ENCODE measurements at regions of chr7 and their contacts with region 1.

Region 1: GRCh38 chr7:32942786-32943653 is 14.2 kb upstream of the FKBP9 start:
- DNase-seq: peak; percentile 90
- ATAC-seq: peak; percentile 96

Region 2: GRCh38 chr7:32846701-32847100 is 96.3 kb before region 1 on chr7:
- intact Hi-C with region 1: loop called (anchors 5 kb)
- DNase-seq: peak; percentile 95
- ATAC-seq: peak; percentile 100

Region 3: DNA sequence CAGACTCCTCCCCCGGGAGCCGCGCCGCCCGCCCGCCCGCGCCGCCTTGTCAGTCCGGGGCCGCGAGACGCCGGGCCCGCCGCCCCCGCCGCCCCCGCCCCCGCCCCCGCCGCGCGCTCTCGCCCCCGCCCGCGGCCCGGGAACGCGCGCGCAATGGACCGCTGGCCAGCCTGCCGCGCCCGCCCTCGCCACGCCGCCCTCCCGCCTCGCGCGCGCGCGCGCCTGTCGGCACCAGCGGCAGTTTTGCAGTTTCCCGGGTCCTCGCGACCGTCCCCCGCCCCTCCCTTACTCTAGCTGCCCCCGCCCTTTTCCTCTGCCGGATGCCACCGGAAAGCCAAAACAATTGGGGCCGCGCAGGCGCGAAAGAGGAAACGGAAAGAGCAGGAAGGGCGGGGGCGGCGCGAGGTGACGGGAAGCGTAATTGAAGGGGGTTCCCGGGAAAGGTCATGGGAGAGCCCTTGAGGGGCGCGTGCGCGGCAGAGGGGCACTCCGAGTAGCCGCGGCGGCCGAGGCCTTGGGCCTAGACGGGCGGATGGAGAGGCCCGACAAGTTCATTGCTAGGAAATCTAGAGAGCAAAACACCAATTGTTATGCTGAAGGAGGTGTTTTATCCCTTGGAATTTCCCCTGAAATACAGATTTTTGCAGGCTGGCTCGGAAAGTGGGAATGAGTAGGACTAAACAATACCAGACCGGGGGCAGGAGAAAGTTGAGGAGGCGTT is 51.1 kb before region 1 on chr7:
- intact Hi-C with region 1: loop called (anchors 5 kb)
- DNase-seq: peak; percentile 98
- ATAC-seq: peak; percentile 90

Region 4: DNA sequence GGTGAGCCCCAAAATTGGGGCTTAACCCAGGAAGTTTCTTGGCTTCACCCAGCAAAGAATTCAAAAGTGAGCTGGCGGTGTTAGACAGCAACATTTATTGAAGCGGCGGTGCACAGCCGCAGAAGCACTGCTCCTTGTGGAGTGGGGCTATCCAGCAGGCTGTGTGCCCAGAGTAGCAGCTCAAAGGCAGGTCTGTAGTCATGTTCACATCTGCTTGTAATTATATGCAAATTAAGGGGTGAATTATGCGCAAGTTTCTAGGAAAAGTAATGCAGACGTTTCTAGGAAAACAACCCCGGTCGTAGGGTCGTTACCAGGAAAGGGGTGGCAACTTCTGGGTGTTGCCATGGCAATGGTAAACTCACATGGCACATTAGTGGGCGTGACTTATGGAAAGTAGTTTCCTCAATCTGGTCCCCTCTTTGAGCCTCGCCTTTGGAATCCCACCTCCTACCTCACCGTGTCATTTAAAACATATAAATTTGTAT is 37.8 kb before region 1 on chr7:
- intact Hi-C with region 1: no loop called
- DNase-seq: peak; percentile 71
- ATAC-seq: peak; percentile 75

Region 5: DNA sequence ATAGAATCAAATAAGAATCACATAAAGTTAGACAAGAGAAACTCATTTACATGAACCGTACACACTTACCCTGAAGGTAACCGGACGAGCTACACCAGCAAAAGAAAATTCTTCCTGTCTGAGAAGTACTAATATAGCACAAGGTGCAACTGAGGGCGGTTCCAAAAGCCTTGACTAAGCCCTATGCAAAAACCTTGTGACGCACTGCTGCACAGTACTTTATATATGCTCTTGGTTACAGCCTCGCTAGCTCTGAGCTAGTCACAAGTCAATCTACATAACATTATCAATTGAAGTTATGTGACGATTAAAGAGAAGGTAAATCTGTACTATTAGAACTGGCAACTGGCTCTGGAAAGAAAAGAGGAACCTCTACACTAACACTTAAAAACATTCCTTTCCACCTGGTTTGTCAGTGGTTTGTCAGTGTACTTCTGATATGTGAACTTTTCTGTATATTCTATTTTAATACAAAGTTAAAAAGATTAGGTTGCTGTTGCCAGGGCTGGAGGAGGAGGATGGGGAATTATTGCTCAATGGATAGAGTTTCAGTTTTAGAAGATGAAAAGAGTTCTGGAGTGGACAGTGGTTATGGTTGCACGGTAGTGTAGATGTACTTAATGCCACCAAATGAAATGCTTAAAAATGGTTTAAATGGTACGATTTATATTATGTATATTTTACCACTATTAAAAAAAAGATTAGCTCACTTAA is 97.9 kb after region 1 on chr7:
- intact Hi-C with region 1: loop called (anchors 10 kb)
- DNase-seq: no peak
- ATAC-seq: peak; percentile 78